ENCODE measurements at regions of chr19 and their contacts with region 1.

Region 1: GRCh38 chr19:5803752-5804515 is 933 bp upstream of the NRTN start:
- DNase-seq: peak; percentile 97
- H3K4me3 Mint-ChIP-seq: peak overlapping the region; percentile 66
- H3K27ac Mint-ChIP-seq: no peak overlapping the region
- H3K4me1 Mint-ChIP-seq: peaks cover 21% of the 10 kb centered on the region
- H3K27me3 Mint-ChIP-seq: peaks cover 22% of the 10 kb centered on the region

Region 2: GRCh38 chr19:5561559-5561958 is 242.4 kb before region 1 on chr19:
- CTCF ChIA-PET with region 1: no interaction called
- POLR2A ChIA-PET with region 1: no interaction called
- intact Hi-C with region 1: no loop called
- DNase-seq: no peak
- H3K4me3 Mint-ChIP-seq: no peak overlapping the region
- H3K27ac Mint-ChIP-seq: no peak overlapping the region
- H3K4me1 Mint-ChIP-seq: no peaks in the 10 kb centered on the region
- H3K27me3 Mint-ChIP-seq: peaks cover 16% of the 10 kb centered on the region

Region 3: DNA sequence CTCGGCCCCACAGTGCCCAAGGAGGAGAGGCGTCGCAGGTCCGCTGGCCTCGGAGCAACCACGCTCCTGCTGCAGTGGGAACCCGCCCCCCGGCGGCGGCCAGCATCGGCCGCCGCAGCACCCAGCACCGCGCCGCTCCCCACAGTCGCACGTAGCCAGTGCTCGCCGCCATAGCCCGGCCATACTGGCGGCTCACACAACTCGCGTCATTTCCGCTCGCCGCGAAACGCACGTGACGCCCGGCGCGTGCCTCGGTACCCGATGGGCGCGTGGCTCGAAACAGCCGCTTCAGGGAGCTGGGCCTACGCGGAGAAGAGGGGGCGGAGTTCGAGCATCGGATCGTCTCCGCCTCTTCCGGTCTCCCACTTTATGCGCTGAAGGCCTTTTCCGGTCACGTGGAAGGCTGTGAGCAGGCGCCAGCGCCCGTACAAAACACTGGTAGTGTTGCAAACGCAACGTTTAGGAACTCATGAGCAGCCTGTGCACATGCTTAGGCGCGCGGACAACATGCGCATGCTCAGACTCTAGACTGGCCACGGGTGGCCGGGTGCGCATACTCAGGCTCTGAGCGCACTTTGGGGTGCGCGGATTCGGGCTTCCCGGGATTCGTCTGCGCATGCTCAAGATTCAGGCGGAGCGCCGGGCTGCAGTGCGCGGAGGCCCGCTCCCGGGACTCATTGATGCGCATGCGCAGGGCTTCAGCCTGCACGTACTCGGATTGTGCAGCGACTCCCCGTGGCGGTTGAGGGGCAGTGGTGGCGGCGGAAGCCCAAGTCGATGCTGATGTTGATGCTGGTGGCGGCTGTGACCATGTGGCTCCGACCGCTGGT is 83.8 kb before region 1 on chr19 and contains the starts of genes CATSPERD and LONP1:
- CTCF ChIA-PET with region 1: interaction called, 11 read pairs
- POLR2A ChIA-PET with region 1: interaction called, 5 read pairs
- intact Hi-C with region 1: no loop called
- DNase-seq: peak; percentile 99
- H3K4me3 Mint-ChIP-seq: peak within 1 kb of the TSS; percentile 95
- H3K27ac Mint-ChIP-seq: peak within 1 kb of the TSS; percentile 99
- H3K4me1 Mint-ChIP-seq: peaks cover 30% of the 10 kb centered on the region
- H3K27me3 Mint-ChIP-seq: no peaks in the 10 kb centered on the region
- total RNA-seq, gene CATSPERD: not detected
- total RNA-seq, gene LONP1: 178 to 181 TPM

Region 4: GRCh38 chr19:5827891-5828660 is 24.1 kb after region 1 on chr19:
- CTCF ChIA-PET with region 1: interaction called, 70 read pairs
- POLR2A ChIA-PET with region 1: interaction called, 21 read pairs
- intact Hi-C with region 1: loop called (anchors 2 kb)
- DNase-seq: peak; percentile 97
- H3K4me3 Mint-ChIP-seq: peak overlapping the region; percentile 98
- H3K27ac Mint-ChIP-seq: peak overlapping the region; percentile 97
- H3K4me1 Mint-ChIP-seq: peaks cover 4% of the 10 kb centered on the region
- H3K27me3 Mint-ChIP-seq: no peaks in the 10 kb centered on the region

Region 5: DNA sequence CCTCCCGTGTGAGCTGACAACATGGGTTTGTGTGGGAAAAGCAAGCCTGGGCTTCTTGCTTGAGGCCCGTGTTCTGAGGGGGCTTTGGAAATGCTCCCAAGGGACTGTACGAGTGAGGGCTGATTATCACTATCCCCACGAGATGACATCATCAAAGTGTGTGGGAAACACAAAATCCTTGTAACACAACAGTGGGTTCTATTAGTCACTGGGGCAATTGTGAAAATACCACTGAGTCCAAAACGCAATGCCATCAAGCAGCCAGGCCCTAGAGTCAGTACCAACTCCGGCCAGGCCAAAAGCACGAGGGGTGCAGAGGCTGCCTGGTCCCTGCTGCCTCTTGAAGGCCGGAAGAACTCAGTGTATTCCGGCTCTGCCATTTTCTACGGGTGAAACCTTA is 139.7 kb after region 1 on chr19:
- CTCF ChIA-PET with region 1: interaction called, 12 read pairs
- POLR2A ChIA-PET with region 1: no interaction called
- intact Hi-C with region 1: no loop called
- DNase-seq: no peak
- H3K4me3 Mint-ChIP-seq: no peak overlapping the region
- H3K27ac Mint-ChIP-seq: no peak overlapping the region
- H3K4me1 Mint-ChIP-seq: peaks cover 30% of the 10 kb centered on the region
- H3K27me3 Mint-ChIP-seq: no peaks in the 10 kb centered on the region

Region 6: DNA sequence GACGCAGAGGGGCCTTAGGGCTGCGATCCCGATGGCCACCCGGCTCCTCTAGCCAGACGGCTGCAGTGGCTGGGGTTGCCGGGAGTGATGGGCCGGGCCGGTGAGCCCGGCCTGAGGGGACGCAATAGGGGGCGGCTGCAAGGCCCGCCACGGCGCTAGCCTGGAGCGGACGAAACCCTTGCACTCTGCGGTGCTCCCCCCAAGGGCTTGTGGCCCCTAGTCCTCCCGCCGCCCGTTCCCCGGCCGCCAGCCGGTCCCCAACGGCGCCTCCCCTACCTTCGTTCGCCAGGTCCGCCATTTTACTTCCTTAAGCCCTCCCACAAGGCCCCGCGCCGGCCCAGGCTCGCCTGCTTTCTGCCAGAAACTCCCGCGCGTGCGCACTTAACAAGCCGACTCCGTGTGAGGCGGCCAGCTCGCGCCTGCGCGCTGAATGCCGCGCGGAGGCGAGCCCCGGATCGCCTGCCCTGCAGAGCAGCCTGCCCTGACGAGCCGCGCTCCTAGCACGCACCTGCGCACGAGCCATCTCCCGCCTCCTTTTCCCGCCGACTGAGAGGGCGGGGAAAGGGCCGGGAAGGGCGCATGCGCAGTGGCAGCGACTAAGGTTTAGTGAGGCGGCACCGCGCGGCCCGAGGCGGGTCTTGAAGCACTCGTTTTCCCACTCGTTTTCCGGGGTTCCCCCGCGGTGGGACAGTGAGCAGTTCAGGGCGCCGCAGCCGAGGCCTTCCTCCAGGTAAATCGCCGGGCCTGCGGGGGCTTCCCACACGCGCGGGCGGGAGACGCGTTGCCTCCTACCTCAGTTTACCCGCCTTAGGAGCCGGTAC is 174.1 kb after region 1 on chr19 and contains the start of gene RANBP3:
- CTCF ChIA-PET with region 1: interaction called, 31 read pairs
- POLR2A ChIA-PET with region 1: interaction called, 5 read pairs
- intact Hi-C with region 1: no loop called
- DNase-seq: peak; percentile 99
- H3K4me3 Mint-ChIP-seq: peak within 1 kb of the TSS; percentile 98
- H3K27ac Mint-ChIP-seq: peak within 1 kb of the TSS; percentile 92
- H3K4me1 Mint-ChIP-seq: peaks cover 57% of the 10 kb centered on the region
- H3K27me3 Mint-ChIP-seq: no peaks in the 10 kb centered on the region
- total RNA-seq, gene RANBP3: 78.1 to 81.3 TPM

Measured in activated CD4-positive, alpha-beta memory T cell treated with anti-CD3 and anti-CD28 coated beads for 36 hours (primary cell).